ENCODE measurements at regions of chr6 and their contacts with region 1.

Region 1: DNA sequence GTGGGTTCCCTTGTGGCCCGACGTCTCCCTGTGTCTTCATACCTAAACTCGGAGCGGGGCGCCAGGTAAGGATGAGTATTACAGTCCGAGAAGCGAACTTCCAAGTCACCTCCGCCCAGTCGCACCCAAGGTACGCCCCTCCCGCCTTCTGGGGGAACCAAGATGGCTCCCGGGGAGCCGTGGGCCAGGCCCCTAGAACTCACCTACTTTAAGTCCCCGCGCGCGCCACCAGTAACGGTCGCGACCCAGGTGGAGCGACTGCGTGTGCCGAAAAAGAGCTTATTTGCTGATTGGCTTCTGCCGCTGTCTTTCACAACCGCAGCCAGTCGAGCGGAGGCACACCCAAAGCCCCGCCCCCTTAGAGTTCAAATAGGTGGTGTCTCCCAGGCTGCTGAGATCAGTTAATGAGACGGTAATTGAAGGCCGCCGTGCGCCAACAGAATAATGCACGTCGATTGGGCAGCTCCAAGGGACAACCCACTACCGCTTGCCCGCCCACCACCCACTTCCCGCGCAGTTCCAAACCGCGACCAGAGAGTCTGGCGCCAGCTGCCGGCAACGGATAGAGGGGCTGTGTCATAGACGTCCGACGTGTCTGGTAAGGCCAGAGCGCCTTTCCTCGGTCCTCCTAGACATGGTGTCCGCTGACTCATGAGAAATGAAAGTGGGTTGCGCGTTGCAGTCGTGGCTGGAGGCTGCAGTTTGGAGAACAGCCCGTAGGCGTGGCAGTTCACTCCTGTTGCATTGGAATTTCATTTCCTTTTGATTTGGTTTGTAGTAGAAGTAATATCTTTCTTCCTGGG is at the start of gene MDC1:
- DNase-seq: peak; percentile 99
- H3K4me3 ChIP-seq: peak within 1 kb of the TSS; percentile 56
- H3K27ac ChIP-seq: peak within 1 kb of the TSS; percentile 88
- H3K4me1 ChIP-seq: peaks cover 7% of the 10 kb centered on the region
- H3K27me3 ChIP-seq: no peaks in the 10 kb centered on the region
- CTCF ChIP-seq: no peak
- total RNA-seq, gene MDC1: 14.0 to 59.0 TPM

Region 2: GRCh38 chr6:30678964-30679726 is 38.1 kb before region 1 on chr6:
- intact Hi-C with region 1: loop called (anchors 1 kb)
- DNase-seq: peak; percentile 91
- H3K4me3 ChIP-seq: peak overlapping the region; percentile 53
- H3K27ac ChIP-seq: peak overlapping the region; percentile 84
- H3K4me1 ChIP-seq: peaks cover 4% of the 10 kb centered on the region
- H3K27me3 ChIP-seq: no peaks in the 10 kb centered on the region
- CTCF ChIP-seq: peak; percentile 85

Region 3: DNA sequence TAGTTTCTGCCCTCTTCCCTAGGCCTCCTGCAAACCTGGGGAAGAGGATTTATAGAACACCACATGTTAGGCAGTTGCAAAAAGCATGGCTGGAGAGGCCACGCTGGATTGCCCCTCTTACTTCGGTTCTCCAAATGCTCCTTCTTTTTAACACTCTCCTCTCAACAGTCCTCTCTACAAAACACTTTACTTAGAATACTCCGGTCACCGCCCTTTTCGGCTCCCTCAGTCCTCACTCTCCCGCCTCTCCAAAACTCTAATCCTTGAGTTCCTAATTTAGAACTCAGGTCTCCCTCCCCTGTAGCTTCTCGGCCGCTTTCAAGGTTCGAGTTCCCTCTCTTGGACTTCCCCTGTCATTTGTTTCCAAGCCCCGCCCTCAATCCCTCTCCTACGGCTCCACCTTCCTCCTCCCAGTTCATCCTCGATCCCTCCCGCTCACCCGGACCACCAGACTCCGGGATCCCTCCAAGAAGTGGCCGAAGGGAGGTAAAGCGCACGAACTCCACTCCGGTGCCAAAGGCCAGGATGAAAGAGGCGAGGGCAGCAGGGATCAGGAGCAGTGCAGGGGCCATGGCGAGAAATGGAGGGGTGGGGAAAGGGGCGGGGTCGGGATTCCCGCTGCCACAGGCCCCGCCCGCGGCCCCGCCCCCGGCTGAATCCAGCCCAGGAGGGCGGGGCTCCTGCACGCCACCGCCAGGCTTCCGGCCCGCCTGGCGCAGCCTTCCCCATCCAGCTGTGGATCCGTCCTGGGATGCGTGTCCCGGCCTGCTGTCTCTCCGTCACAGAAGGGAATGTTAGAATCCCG is 26.6 kb before region 1 on chr6 and contains the start of gene NRM:
- intact Hi-C with region 1: loop called (anchors 2 kb)
- DNase-seq: peak; percentile 91
- H3K4me3 ChIP-seq: peak within 1 kb of the TSS; percentile 59
- H3K27ac ChIP-seq: peak within 1 kb of the TSS; percentile 79
- H3K4me1 ChIP-seq: peaks cover 11% of the 10 kb centered on the region
- H3K27me3 ChIP-seq: no peaks in the 10 kb centered on the region
- CTCF ChIP-seq: no peak
- total RNA-seq, gene NRM: 7.4 to 19.2 TPM

Region 4: DNA sequence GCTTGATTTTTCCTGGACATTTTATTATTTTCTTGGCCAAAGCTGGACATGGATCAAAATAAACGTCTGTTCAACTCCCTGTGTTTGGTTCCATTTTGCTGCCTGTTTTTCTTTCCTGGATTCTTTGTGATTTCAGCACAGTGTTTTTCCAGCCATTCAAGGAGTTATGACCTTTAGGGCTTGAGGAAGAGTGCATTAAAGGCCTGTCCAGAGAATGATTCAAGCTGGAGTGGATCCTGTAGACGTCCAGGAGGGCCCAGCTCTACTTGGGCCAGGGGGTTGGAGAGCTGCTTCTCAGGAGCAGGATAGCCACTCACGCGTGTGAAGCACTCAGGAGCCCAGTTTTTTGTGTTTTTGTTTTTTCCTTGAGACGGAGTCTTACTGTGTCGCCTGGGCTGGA is 83.6 kb after region 1 on chr6:
- intact Hi-C with region 1: no loop called
- DNase-seq: no peak
- H3K4me3 ChIP-seq: no peak overlapping the region
- H3K27ac ChIP-seq: no peak overlapping the region
- H3K4me1 ChIP-seq: no peaks in the 10 kb centered on the region
- H3K27me3 ChIP-seq: no peaks in the 10 kb centered on the region
- CTCF ChIP-seq: no peak